Right ventricle myocardium inferior (tissue), 1 donor: ENCODE measurements at regions of chr3 and their contacts with region 1.

Region 1: DNA sequence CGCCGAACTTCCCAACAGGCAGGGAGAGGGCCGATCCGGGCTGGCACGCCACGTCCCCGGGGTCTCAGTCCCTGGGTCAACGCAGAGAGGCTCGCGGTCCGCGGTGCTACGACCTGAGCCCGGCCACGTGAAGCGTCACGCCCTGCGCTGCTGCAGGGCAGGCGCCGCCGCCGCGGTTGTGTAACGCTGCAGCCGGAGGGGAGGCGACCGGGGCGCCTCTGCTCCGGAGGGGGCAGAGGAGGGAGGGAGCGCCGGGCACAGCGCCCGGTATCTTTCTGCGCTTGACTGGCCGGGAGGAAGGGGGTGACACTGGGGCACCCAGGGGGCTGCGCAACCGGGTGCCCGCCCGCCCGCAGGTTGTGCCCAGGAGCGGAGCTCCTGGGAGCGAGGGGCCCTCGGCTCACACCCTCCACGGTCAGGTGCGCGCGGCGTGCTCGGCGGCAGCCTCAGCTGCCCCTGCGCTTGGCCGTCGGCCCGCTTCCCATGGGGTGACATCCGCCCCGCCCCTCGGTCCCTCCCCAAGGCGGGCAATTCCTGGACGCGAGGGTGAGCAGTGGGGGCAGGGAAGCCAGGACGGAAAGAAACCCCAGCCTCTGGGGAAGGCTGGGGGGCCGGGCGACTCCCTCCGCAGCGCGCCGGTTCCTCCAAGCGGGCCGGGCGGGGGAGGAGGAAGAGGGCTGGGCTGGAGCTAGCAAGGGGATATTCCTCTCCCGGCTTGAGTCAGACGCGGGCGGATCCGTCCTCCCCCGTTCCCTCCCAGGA is 852 bp upstream of the BHLHE40 start:
- DNase-seq: peak; percentile 98
- ATAC-seq: peak; percentile 84

Region 2: GRCh38 chr3:4722103-4722502 is 256.3 kb before region 1 on chr3:
- intact Hi-C with region 1: loop called (anchors 2 kb)
- DNase-seq: peak; percentile 60
- ATAC-seq: peak; percentile 72

Region 3: DNA sequence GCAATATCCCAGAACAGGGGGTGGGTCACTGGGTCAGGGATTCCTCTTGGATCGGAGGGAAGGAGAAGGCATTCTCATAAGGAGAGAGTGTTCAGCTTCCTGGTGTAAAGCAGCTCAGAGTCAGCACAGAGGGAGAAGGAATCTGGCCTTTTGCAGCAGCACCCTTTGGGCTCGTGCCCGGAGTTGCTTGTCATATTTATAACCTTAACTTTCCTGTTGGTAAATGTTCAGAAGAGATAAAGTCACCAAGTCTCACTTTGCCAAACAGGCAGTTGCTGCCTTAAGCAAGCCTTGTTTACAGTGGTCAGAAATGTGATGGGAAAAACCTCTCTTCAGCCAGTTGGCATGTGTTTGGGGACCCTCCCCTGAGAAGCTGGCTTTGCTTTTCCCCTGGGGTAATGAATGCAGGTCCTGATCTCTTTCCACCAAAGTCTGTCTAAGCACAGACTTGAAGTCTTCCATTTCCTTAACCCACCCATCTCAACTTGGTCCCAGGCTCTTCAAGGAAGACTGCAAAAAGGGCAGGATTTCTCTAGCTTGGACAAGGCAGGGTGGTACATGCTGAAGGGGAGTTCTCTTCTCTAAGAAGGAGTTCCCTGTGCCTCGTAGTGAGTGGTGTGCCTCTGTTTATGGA is 206.1 kb before region 1 on chr3:
- intact Hi-C with region 1: loop called (anchors 1 kb)
- DNase-seq: peak; percentile 89
- ATAC-seq: peak; percentile 82

Region 4: GRCh38 chr3:4826237-4827100 is 151.9 kb before region 1 on chr3:
- intact Hi-C with region 1: loop called (anchors 1 kb)
- DNase-seq: peak; percentile 84
- ATAC-seq: peak; percentile 89

Region 5: DNA sequence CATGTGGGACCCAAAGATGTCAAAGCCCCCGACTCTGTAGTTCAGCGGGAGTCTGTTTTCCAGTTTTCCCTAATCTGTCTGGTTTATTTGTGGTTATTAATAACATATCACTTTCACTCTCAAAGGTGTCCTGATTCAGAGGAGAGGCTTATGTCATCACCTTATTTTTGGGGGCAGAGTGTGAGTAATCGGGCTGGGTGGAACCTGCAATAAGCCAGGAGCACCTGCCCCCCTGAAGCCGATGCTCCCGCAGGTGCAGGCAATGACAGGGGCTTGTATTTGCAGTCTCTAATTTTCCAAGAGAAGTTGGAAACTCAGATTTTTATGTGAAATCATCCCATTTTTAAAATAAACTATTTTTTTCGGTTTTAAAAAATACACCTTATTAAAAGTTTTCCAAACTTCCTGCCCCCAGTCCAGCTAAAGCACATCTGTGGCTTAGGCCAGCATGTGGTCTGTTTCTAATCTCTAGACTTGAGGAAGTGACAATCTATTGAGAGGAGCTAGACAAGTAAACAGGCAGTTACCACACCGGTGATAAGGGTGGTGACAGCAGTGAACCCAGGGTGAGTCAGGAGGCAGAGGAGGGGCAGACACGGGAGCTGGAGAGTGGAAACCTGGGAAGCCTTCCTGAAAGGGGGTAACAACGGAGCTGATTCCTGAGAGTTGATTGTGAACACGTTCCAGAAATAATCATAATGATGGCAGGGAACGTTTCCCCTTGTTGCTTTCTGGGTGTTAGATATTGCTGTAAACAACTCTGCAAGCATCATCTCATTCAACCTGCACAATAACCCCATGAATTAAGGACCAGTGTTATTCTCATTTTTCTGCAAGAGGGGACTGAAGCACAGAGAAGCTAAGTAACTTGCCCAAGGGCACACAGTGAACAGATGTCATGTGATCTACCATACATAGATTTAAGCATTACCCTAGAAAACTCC is 38.1 kb after region 1 on chr3:
- intact Hi-C with region 1: loop called (anchors 2 kb)
- DNase-seq: no peak
- ATAC-seq: peak; percentile 56

Region 6: GRCh38 chr3:5026331-5027218 is 48.2 kb after region 1 on chr3:
- intact Hi-C with region 1: loop called (anchors 2 kb)
- DNase-seq: peak; percentile 93
- ATAC-seq: peak; percentile 94

Region 7: GRCh38 chr3:5057857-5058324 is 79.5 kb after region 1 on chr3:
- intact Hi-C with region 1: loop called (anchors 2 kb)
- DNase-seq: no peak
- ATAC-seq: peak; percentile 93